PC-3 (cell line): ENCODE measurements at regions of chr7 and their contacts with region 1.

Region 1: DNA sequence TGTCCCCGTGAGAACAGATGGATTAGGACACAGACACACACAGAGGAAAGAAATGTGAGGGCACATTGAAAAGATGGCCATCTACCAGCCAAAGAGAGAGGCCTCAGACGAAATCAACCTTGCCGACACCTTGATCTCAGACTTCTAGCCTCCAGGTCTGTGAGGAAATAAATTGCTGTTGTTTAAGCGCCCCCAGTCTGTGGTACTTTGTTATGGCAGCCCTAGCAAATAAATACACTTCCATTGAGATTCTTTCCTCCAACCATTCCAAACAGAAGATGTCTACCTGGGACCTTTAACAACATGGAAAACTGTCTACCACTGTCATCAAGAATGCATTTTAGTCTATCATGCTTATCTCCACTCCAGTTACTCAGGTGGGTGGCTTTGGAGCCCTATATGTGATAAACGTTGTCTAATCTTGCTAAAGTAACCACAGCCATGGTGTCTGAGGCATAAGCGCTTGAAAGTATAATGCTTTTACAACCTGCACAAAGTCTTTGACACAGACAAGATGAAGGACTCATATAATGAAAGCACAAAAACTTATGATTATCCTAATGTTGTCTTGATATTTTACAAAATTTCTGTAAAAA is 244.3 kb downstream of the MTERF1 start:
- DNase-seq: peak; percentile 57
- ATAC-seq: peak; percentile 68
- H3K4me3 ChIP-seq: no peak overlapping the region
- H3K27ac ChIP-seq: no peak overlapping the region
- H3K4me1 ChIP-seq: peaks cover 10% of the 10 kb centered on the region
- H3K27me3 ChIP-seq: no peaks in the 10 kb centered on the region
- CTCF ChIP-seq: peak; percentile 71

Region 2: GRCh38 chr7:91288208-91288824 is 347.9 kb before region 1 on chr7:
- CTCF ChIA-PET with region 1: no interaction called
- POLR2A ChIA-PET with region 1: no interaction called
- intact Hi-C with region 1: loop called (anchors 1 kb)
- DNase-seq: peak; percentile 53
- ATAC-seq: peak; percentile 53; the same call in 1 of the 2 replicates
- H3K4me3 ChIP-seq: no peak overlapping the region
- H3K27ac ChIP-seq: no peak overlapping the region
- H3K4me1 ChIP-seq: no peaks in the 10 kb centered on the region; the same call in 1 of the 2 replicates
- H3K27me3 ChIP-seq: no peaks in the 10 kb centered on the region
- CTCF ChIP-seq: peak; percentile 65

Region 3: GRCh38 chr7:91503934-91504555 is 132.2 kb before region 1 on chr7:
- CTCF ChIA-PET with region 1: no interaction called
- POLR2A ChIA-PET with region 1: no interaction called
- intact Hi-C with region 1: no loop called
- DNase-seq: no peak
- ATAC-seq: no peak
- H3K4me3 ChIP-seq: no peak overlapping the region
- H3K27ac ChIP-seq: no peak overlapping the region
- H3K4me1 ChIP-seq: no peaks in the 10 kb centered on the region
- H3K27me3 ChIP-seq: no peaks in the 10 kb centered on the region
- CTCF ChIP-seq: no peak

Region 4: GRCh38 chr7:91710881-91711280 is 74.7 kb after region 1 on chr7:
- CTCF ChIA-PET with region 1: no interaction called
- POLR2A ChIA-PET with region 1: no interaction called
- intact Hi-C with region 1: loop called (anchors 5 kb)
- DNase-seq: no peak
- ATAC-seq: no peak
- H3K4me3 ChIP-seq: no peak overlapping the region
- H3K27ac ChIP-seq: no peak overlapping the region
- H3K4me1 ChIP-seq: peaks cover 15% of the 10 kb centered on the region
- H3K27me3 ChIP-seq: no peaks in the 10 kb centered on the region
- CTCF ChIP-seq: no peak

Region 5: GRCh38 chr7:92025260-92025659 is 389.0 kb after region 1 on chr7:
- CTCF ChIA-PET with region 1: interaction called, 20 read pairs
- POLR2A ChIA-PET with region 1: no interaction called
- intact Hi-C with region 1: no loop called
- DNase-seq: peak; percentile 89
- ATAC-seq: peak; percentile 98
- H3K4me3 ChIP-seq: peak overlapping the region; percentile 5; the same call in 1 of the 2 replicates
- H3K27ac ChIP-seq: peak overlapping the region; percentile 80
- H3K4me1 ChIP-seq: peaks cover 36% of the 10 kb centered on the region
- H3K27me3 ChIP-seq: no peaks in the 10 kb centered on the region
- CTCF ChIP-seq: no peak